Gastrocnemius medialis (tissue), 4 donors: ENCODE measurements at regions of chr4 and their contacts with region 1.

Region 1: GRCh38 chr4:1809754-1810511 is 16.8 kb downstream of the FGFR3 start:
- DNase-seq: no peak
- ATAC-seq: peak; percentile 30 to 60
- H3K4me3 ChIP-seq: no peak overlapping the region
- H3K27ac ChIP-seq: no peak overlapping the region
- H3K4me1 ChIP-seq: peaks cover 3 to 9% of the 10 kb centered on the region in 2 donors
- H3K27me3 ChIP-seq: no peaks in the 10 kb centered on the region
- CTCF ChIP-seq: peak; percentile 38 to 76 (median 65)
- POLR2A ChIP-seq: no peak

Region 2: DNA sequence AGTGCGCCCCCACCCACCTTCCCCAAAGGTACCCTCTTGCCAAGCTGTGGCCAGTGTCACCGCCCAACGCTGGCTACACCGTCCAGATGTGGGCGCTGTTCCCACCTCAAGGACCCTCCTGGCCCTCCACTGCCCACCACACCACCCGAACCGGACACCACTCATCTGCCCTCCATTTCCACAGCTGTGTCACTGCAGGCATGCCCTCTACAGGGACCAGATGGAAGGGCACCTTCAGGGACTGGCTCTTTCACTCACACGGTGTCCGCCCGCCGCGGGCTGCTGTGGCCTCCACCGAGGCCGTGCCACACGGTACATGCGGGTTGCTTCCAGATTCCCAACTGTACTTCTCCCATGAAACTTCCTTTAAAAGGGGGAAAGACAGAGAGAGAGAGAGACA is 213.5 kb before region 1 on chr4:
- in situ Hi-C with region 1: no loop called
- intact Hi-C with region 1: no loop called
- DNase-seq: no peak
- ATAC-seq: no peak
- H3K4me3 ChIP-seq: no peak overlapping the region
- H3K27ac ChIP-seq: no peak overlapping the region
- H3K4me1 ChIP-seq: no peaks in the 10 kb centered on the region
- H3K27me3 ChIP-seq: peaks cover 15 to 24% (median 18%) of the 10 kb centered on the region in 3 donors
- CTCF ChIP-seq: no peak
- POLR2A ChIP-seq: no peak

Region 3: GRCh38 chr4:1746265-1746691 is 63.7 kb before region 1 on chr4:
- in situ Hi-C with region 1: no loop called
- intact Hi-C with region 1: loop called (anchors 2 kb)
- DNase-seq: peak in 1 of 2 donors; percentile 41
- ATAC-seq: peak in 1 of 2 donors; percentile 63
- H3K4me3 ChIP-seq: no peak overlapping the region
- H3K27ac ChIP-seq: no peak overlapping the region
- H3K4me1 ChIP-seq: no peaks in the 10 kb centered on the region
- H3K27me3 ChIP-seq: no peaks in the 10 kb centered on the region
- CTCF ChIP-seq: peak; percentile 59 to 87 (median 76)
- POLR2A ChIP-seq: no peak

Region 4: GRCh38 chr4:1899149-1900086 is 89.5 kb after region 1 on chr4:
- in situ Hi-C with region 1: no loop called
- intact Hi-C with region 1: loop called (anchors 10 kb)
- DNase-seq: peak; percentile 42 to 54
- ATAC-seq: peak; percentile 86 to 94
- H3K4me3 ChIP-seq: no peak overlapping the region
- H3K27ac ChIP-seq: no peak overlapping the region
- H3K4me1 ChIP-seq: no peaks in the 10 kb centered on the region
- H3K27me3 ChIP-seq: no peaks in the 10 kb centered on the region
- CTCF ChIP-seq: peak; percentile 69 to 91 (median 87)
- POLR2A ChIP-seq: no peak

Region 5: DNA sequence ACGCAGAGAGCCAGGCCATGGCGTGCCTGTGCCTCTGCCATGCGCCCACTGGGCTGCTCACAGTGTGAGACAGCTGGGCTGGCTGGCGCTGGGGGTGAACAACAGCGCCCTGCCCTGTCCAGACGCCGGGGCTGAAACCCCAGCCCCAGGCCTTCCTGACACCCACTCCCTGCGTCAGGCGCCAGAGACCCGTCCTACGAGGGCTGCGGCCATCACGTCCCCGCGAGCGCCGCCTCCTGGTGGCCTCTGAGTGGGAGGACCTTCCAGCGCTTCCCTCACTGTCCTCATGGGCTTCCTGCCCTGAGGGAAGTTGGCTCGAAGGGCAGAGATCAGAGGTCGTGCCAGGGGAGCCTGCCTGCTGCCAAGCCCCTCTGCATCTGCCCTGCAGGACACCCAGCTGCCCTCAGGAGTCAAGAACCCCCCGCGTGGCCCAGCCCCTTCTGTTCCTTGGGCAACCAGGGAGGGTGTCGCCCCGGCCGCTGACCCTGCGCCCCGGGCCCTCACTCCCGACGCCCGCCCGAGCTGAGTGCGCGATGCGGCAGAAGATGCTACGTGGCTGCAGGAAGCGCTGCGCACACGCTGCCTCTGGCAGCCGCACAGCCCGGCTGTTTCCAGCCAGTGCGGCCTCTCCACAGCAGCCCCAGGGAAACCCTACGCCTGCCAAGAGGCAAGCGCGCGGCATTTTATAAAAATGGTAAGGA is 182.7 kb after region 1 on chr4:
- in situ Hi-C with region 1: no loop called
- intact Hi-C with region 1: no loop called
- DNase-seq: peak in 1 of 2 donors; percentile 42
- ATAC-seq: peak in 1 of 2 donors; percentile 58
- H3K4me3 ChIP-seq: peak overlapping the region in 1 of 4 donors; percentile 16
- H3K27ac ChIP-seq: peak overlapping the region in 2 of 4 donors; percentile 38 to 52
- H3K4me1 ChIP-seq: peaks cover 6 to 9% of the 10 kb centered on the region in 2 donors
- H3K27me3 ChIP-seq: no peaks in the 10 kb centered on the region
- CTCF ChIP-seq: no peak
- POLR2A ChIP-seq: no peak